ENCODE measurements at regions of chr13 and their contacts with region 1.

Region 1: DNA sequence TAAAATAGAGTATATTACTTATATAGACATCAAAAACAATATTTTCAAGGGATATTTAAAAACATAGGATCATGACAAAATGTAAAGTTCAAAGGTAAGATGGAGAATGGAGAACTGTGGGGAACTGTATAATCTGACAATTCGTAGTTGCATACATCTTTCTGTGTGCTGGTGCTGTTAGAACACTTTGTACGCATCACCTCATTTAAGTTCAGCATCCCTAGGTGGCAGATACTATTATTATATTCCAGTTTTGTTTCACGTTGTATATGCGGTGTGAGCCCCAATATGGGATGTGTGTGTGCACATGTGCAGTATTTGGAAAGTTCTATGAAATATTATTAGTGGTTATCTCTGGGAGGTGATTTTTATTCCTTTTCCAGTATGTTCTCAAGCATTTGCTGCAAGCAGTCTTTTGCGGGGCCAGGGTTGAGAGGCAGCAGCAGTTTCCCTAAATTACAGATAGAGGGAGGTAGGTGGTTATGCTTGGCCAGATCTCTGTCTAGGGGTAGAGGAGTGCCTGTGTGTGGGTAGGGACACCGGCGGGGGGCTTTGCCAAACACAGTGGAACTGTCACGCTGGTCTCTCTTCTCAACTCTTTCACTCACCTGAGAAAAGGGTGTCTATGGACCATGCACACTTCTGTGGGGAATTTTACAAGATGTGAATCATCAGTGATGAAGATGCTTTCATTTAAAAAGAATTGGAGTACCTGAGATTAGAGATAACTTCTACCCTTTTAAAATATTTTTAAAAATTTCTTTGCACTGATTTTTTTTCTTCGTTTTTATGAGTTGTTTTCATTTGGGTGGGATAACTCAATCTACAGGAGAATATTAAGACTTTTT is 55.6 kb upstream of the ALOX5AP start:
- DNase-seq: no peak
- ATAC-seq: peak; percentile 62 to 68
- H3K4me3 ChIP-seq: no peak overlapping the region
- H3K27ac ChIP-seq: no peak overlapping the region
- H3K4me1 ChIP-seq: no peaks in the 10 kb centered on the region
- H3K27me3 ChIP-seq: no peaks in the 10 kb centered on the region
- CTCF ChIP-seq: peak in 2 of 5 experiments; percentile 38 to 45
- POLR2A ChIP-seq: no peak

Region 2: GRCh38 chr13:30629527-30629926 is 50.2 kb before region 1 on chr13:
- in situ Hi-C with region 1: no loop called
- intact Hi-C with region 1: no loop called
- DNase-seq: no peak
- ATAC-seq: no peak
- H3K4me3 ChIP-seq: no peak overlapping the region
- H3K27ac ChIP-seq: no peak overlapping the region
- H3K4me1 ChIP-seq: peaks cover 0 to 8% of the 10 kb centered on the region in 2 donors
- H3K27me3 ChIP-seq: no peaks in the 10 kb centered on the region
- CTCF ChIP-seq: no peak
- POLR2A ChIP-seq: no peak

Region 3: DNA sequence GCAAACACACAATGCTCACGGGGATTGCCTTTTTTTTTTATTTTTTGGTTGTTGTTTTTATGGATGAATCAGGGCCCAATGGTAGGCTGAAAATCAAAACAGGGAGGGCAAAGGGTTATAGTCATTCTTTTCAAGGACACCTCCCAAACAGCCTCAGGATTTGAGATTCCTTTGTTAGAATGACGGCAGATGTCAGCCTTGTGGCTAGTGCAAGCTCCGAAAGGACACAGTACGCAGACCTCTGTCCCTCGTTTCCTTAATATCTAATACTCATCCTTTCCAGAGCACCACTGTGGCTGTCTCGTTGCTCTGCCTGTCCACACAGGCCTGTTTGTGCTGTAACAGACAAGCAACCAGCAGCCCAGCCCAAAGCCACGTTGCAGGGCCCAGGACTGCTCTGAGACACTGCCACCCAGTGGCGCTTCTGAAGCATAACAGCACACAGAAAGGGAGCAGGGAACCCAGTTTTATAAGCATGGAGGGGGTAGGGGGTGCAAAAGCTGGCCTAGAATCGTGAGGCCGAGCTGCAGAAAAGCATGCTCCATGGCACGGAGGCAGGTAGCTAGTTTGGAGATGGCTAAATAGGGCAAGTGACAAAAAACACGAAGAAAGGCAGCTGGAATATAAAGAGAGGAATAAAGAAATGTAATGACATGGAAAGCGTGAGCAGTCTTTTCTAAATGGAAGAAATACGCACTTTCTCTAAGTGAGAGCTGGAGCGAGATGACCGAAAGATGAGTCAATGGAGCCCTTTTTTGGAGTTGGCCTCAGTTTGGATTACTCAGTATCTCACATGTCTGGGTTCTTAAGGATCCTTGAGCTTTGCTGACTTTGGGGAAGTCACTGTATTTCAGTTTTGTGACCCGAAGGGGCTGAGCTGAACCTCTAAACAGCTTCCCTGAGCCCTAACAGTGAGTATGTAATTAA is 185.7 kb after region 1 on chr13:
- in situ Hi-C with region 1: no loop called
- intact Hi-C with region 1: loop called (anchors 5 kb)
- DNase-seq: peak; percentile 68 to 71
- ATAC-seq: peak; percentile 69
- H3K4me3 ChIP-seq: no peak overlapping the region
- H3K27ac ChIP-seq: peak overlapping the region; percentile 34 to 49 (median 43)
- H3K4me1 ChIP-seq: peaks cover 6 to 23% of the 10 kb centered on the region in 2 donors
- H3K27me3 ChIP-seq: no peaks in the 10 kb centered on the region
- CTCF ChIP-seq: peak; percentile 67 to 90 (median 81)
- POLR2A ChIP-seq: peak in 1 of 2 donors; percentile 6